B cell (primary cell): ENCODE measurements at regions of chr1 and their contacts with region 1.

Region 1: DNA sequence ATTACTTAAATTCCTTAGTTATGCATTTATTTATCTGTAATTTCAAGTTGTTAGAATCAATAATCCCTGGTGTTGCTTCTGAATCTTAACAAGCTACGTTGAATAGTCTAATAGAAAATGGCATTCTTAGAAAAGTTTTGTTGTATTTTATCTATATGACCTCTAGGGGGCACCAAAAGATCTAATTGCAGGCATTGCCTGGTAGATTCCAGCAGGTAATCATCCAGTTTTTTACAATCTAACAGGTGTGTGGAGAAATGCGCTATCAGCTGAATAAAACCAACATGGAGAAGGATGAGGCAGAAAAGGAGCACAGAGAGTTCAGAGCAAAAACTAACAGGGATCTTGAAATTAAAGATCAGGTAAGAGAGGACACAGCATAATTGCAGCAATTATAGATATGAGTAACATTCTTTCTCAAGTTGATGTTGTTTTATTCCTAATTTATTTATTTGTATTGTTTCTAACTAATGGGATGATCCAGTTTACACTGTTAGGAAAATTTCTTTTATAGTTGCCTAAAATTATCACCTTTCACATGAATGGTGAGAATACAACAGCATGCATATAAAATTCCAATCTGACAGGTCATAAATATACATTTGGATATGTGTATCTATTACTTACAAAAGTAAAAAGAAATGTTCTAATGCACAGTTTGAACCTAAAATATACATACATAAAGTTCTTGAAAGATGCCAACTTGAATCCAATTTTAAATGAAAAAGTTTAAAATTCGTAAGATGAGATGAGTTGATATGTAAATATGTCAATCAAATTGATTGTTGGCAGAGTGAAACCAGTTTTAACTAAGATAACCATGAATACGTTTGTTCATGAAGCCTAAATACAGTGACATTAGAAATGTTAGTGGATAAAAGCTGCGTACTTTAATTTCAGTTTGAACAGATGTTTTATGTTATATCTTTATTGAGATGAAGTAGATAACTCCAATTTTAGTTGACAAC is 88.4 kb downstream of the SDCCAG8 start:
- DNase-seq: peak; percentile 68
- ATAC-seq: peak; percentile 21
- H3K4me3 ChIP-seq: no peak overlapping the region
- H3K4me3 Mint-ChIP-seq: no peak overlapping the region
- H3K27ac ChIP-seq: no peak overlapping the region
- H3K27ac Mint-ChIP-seq: no peak overlapping the region
- H3K4me1 ChIP-seq: no peaks in the 10 kb centered on the region
- H3K4me1 Mint-ChIP-seq: no peaks in the 10 kb centered on the region
- H3K27me3 ChIP-seq: no peaks in the 10 kb centered on the region
- H3K27me3 Mint-ChIP-seq: no peaks in the 10 kb centered on the region
- CTCF ChIP-seq: peak; percentile 93

Region 2: GRCh38 chr1:243230914-243231313 is 113.3 kb before region 1 on chr1:
- CTCF ChIA-PET with region 1: no interaction called
- POLR2A ChIA-PET with region 1: no interaction called
- intact Hi-C with region 1: no loop called
- DNase-seq: peak; percentile 27
- ATAC-seq: peak; percentile 21
- H3K4me3 ChIP-seq: no peak overlapping the region
- H3K4me3 Mint-ChIP-seq: no peak overlapping the region
- H3K27ac ChIP-seq: no peak overlapping the region
- H3K27ac Mint-ChIP-seq: no peak overlapping the region
- H3K4me1 ChIP-seq: peaks cover 0 to under 1% of the 10 kb centered on the region in 2 donors
- H3K4me1 Mint-ChIP-seq: peaks cover 21% of the 10 kb centered on the region
- H3K27me3 ChIP-seq: no peaks in the 10 kb centered on the region
- H3K27me3 Mint-ChIP-seq: no peaks in the 10 kb centered on the region
- CTCF ChIP-seq: no peak

Region 3: DNA sequence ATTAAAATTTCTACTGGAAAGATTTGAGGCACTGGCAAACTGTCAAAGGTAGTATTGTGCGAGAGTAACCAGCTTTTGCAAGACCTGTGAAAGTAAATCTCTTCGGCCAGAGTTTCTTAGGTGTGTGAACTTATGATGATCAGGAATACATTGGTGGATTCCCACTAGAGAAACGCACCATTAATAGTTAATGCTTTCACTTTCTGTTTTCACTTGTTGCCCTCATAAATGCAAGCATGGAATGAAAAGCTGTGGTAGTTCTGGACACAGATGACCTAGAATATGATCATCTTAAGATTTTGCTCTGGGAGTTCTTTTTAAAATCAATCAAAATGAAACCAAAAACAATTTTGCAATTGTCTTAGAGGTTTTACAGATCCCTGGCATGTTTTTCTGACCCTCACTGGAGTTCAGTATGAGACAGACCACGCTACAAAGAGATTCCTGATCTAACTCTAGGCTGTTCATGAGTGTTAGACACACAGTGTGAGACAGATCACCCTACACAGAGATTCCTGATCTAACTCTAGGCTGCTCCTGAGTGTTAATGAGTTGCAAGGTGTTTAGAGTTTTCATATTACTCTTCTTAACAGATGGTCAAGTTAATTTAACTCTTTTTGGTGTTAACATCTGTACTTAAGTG is 10.4 kb after region 1 on chr1:
- CTCF ChIA-PET with region 1: interaction called, 13 read pairs
- POLR2A ChIA-PET with region 1: no interaction called
- intact Hi-C with region 1: no loop called
- DNase-seq: no peak
- ATAC-seq: no peak
- H3K4me3 ChIP-seq: no peak overlapping the region
- H3K4me3 Mint-ChIP-seq: peak overlapping the region; percentile 69
- H3K27ac ChIP-seq: no peak overlapping the region
- H3K27ac Mint-ChIP-seq: no peak overlapping the region
- H3K4me1 ChIP-seq: peaks cover 3 to 9% of the 10 kb centered on the region in 2 donors
- H3K4me1 Mint-ChIP-seq: peaks cover 15% of the 10 kb centered on the region
- H3K27me3 ChIP-seq: no peaks in the 10 kb centered on the region
- H3K27me3 Mint-ChIP-seq: no peaks in the 10 kb centered on the region
- CTCF ChIP-seq: no peak

Region 4: DNA sequence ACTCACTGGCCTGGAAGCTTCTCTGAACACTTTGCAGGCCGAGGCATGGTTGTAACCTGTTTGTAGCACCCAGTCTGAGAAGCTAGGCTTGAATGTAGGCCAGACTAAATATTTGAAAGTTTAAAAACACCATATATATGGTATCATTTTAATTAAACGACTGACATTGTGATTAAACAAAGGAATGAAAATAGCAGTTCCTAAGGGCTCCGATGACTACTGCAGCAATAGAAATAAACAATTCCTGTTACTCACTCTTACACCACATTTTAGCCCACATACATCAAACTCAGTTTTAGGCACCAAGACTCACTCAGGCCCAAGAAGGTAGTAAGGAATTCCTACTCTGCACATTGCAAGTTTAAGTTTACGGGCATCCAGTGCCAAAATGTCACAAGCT is 224.5 kb after region 1 on chr1:
- CTCF ChIA-PET with region 1: no interaction called
- POLR2A ChIA-PET with region 1: no interaction called
- intact Hi-C with region 1: no loop called
- DNase-seq: no peak
- ATAC-seq: no peak
- H3K4me3 ChIP-seq: no peak overlapping the region
- H3K4me3 Mint-ChIP-seq: no peak overlapping the region
- H3K27ac ChIP-seq: no peak overlapping the region
- H3K27ac Mint-ChIP-seq: no peak overlapping the region
- H3K4me1 ChIP-seq: no peaks in the 10 kb centered on the region
- H3K4me1 Mint-ChIP-seq: peaks cover 2% of the 10 kb centered on the region
- H3K27me3 ChIP-seq: no peaks in the 10 kb centered on the region
- H3K27me3 Mint-ChIP-seq: no peaks in the 10 kb centered on the region
- CTCF ChIP-seq: no peak

Region 5: DNA sequence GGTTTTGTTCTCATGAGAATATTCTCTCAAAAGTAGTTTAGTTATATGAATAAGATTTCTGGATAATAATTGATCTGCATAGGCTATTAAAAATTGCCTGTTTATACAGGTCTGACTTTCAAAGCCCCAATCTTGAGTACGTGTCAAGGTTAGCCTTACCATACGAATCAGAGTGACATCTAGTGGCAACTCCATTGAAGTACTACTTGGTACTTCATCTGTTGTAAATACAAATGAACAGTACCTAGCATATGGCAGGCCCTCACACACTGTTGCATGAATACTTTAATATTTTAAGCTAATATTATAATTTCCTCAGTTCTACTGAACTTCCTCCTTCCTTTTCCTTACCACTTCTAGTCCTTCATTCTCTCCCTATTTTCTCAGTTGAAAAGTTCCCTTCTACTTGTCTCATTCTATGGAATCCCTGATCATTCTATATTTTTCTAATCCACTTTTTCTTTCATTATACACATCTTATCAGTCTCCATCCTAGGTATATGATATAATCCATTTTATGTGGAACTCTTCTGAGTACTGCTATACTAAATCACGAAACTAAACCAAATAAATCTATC is 404.5 kb after region 1 on chr1:
- CTCF ChIA-PET with region 1: interaction called, 43 read pairs
- POLR2A ChIA-PET with region 1: no interaction called
- intact Hi-C with region 1: loop called (anchors 1 kb)
- DNase-seq: peak; percentile 73
- ATAC-seq: peak; percentile 93
- H3K4me3 ChIP-seq: no peak overlapping the region
- H3K4me3 Mint-ChIP-seq: no peak overlapping the region
- H3K27ac ChIP-seq: no peak overlapping the region
- H3K27ac Mint-ChIP-seq: no peak overlapping the region
- H3K4me1 ChIP-seq: no peaks in the 10 kb centered on the region
- H3K4me1 Mint-ChIP-seq: peaks cover 1% of the 10 kb centered on the region
- H3K27me3 ChIP-seq: no peaks in the 10 kb centered on the region
- H3K27me3 Mint-ChIP-seq: no peaks in the 10 kb centered on the region
- CTCF ChIP-seq: peak; percentile 94

Region 6: GRCh38 chr1:243946946-243947345 is 602.7 kb after region 1 on chr1:
- CTCF ChIA-PET with region 1: interaction called, 5 read pairs
- POLR2A ChIA-PET with region 1: no interaction called
- intact Hi-C with region 1: loop called (anchors 2 kb)
- DNase-seq: peak; percentile 37
- ATAC-seq: no peak
- H3K4me3 ChIP-seq: no peak overlapping the region
- H3K4me3 Mint-ChIP-seq: no peak overlapping the region
- H3K27ac ChIP-seq: no peak overlapping the region
- H3K27ac Mint-ChIP-seq: no peak overlapping the region
- H3K4me1 ChIP-seq: no peaks in the 10 kb centered on the region
- H3K4me1 Mint-ChIP-seq: no peaks in the 10 kb centered on the region
- H3K27me3 ChIP-seq: peaks cover 0 to 9% (median 2%) of the 10 kb centered on the region in 4 experiments
- H3K27me3 Mint-ChIP-seq: peaks cover 8% of the 10 kb centered on the region
- CTCF ChIP-seq: peak; percentile 51

Region 7: GRCh38 chr1:244302889-244303613 is 958.8 kb after region 1 on chr1:
- CTCF ChIA-PET with region 1: interaction called, 12 read pairs
- POLR2A ChIA-PET with region 1: no interaction called
- intact Hi-C with region 1: loop called (anchors 1 kb)
- DNase-seq: no peak
- ATAC-seq: no peak
- H3K4me3 ChIP-seq: no peak overlapping the region
- H3K4me3 Mint-ChIP-seq: no peak overlapping the region
- H3K27ac ChIP-seq: no peak overlapping the region
- H3K27ac Mint-ChIP-seq: no peak overlapping the region
- H3K4me1 ChIP-seq: peaks cover 4 to 17% of the 10 kb centered on the region in 2 donors
- H3K4me1 Mint-ChIP-seq: peaks cover 10% of the 10 kb centered on the region
- H3K27me3 ChIP-seq: no peaks in the 10 kb centered on the region
- H3K27me3 Mint-ChIP-seq: no peaks in the 10 kb centered on the region
- CTCF ChIP-seq: no peak